ENCODE measurements at regions of chr5 and their contacts with region 1.

Region 1: DNA sequence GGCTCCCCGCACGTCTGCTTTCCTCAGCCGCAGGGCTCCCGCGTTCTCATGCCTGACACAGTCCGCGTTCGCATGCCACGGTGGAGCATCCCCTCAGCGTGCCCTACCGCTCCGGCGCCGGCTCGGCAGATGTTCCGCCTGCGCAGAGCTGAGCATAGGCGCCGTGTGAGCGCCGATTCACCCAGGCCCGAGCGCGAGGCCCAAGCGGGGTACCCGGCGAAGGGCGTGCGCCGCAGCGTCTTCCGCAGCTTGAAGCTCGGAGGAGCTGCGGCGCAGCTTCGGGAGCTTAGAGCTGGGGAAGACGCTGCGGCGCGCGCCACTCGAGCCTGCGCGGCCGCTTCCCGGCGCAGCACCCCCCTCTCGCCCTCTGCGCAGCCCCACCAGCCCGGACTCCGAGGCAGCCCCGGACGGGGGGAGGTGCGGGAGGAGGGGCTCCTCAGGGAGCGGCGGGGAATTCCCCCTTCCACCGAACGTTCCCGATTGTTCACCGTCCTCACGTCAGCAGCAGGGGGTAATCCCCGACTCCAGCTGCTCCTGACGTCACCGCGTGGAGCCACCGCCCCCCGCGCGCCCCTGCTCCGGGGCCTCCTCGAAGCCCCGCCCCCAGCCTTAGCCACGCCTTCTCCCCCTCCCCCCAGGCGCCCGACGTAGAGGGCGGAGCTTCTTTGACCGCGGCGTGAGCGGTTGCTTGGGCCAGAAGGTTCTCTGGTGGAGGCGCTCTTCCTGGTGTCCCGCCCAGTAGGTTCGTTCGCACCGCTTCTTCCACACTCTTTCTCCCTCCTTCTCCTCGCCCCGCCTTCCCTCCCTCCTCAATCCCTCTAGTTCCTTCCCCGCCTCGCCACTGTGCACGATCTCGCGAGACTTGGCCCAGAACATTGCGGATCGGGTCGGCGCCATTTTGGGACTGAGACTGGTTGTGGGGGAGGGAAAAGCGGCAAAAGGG is at the start of gene GPBP1:
- DNase-seq: peak; percentile 99
- H3K4me3 Mint-ChIP-seq: peak within 1 kb of the TSS; percentile 94
- H3K27ac Mint-ChIP-seq: peak within 1 kb of the TSS; percentile 97
- H3K4me1 Mint-ChIP-seq: peaks cover 19% of the 10 kb centered on the region
- H3K27me3 Mint-ChIP-seq: no peaks in the 10 kb centered on the region
- total RNA-seq, gene GPBP1: 91.5 to 91.9 TPM

Region 2: GRCh38 chr5:55994574-55995333 is 1178.7 kb before region 1 on chr5 and contains the start of gene IL6ST:
- CTCF ChIA-PET with region 1: no interaction called
- intact Hi-C with region 1: loop called (anchors 1 kb)
- DNase-seq: peak; percentile 97
- H3K4me3 Mint-ChIP-seq: peak within 1 kb of the TSS; percentile 100
- H3K27ac Mint-ChIP-seq: peak within 1 kb of the TSS; percentile 100
- H3K4me1 Mint-ChIP-seq: peaks cover 53% of the 10 kb centered on the region
- H3K27me3 Mint-ChIP-seq: no peaks in the 10 kb centered on the region
- total RNA-seq, gene IL6ST: 93.4 to 103 TPM

Region 3: DNA sequence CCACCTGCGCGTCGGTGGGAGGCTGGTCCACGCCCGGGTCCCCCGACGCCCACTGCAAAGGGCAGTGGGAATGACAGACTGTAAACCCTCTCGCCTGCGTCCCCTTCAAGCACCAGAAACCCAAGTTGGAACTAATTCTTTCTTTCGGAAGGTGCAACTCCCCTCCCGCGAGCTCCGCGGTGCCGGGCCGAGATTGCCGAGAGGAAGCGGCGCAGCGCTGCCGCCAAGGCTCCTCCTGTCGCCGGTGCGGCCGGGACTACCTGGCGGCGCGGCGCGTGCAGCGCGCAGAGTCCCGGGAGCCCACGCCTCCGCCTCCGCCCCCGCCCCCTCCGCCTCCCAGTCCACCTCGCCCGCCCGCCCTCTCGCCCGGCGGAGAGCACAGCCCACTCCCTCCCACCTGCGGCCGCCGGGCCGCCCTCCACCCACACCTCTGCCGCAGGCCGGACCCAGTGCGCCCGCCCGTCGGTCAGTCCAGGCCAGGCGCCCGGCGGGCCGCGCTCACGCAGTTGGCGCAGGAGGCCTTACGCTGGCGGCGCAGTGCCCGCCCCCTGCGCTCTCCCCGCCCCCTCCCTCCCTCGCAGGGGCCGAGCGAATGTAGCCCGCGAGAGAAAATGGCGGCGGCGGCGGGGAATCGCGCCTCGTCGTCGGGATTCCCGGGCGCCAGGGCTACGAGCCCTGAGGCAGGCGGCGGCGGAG is 358.3 kb before region 1 on chr5 and contains the start of gene MAP3K1:
- CTCF ChIA-PET with region 1: no interaction called
- intact Hi-C with region 1: loop called (anchors 1 kb)
- DNase-seq: peak; percentile 74
- H3K4me3 Mint-ChIP-seq: peak within 1 kb of the TSS; percentile 88
- H3K27ac Mint-ChIP-seq: peak within 1 kb of the TSS; percentile 87
- H3K4me1 Mint-ChIP-seq: peaks cover 34% of the 10 kb centered on the region
- H3K27me3 Mint-ChIP-seq: no peaks in the 10 kb centered on the region
- total RNA-seq, gene MAP3K1: 18.2 to 19.2 TPM

Region 4: DNA sequence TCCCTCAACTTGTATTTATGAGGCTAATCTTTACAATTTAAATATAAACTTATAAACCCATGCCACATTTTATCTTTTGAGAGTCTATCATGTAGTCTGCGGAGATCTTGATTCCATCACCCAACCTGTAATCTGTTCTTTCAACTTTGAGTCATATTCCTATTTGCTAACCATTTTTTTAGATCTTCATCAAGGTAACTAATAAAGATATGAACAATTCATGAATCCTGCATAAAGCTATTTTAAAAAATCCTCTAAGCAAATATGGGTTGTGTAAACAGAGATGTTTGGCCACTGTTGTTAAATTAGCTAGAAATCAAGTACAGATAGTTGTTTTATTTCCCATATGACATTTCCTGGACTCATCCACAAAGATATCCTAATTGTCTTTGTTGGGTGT is 123.5 kb before region 1 on chr5:
- CTCF ChIA-PET with region 1: no interaction called
- intact Hi-C with region 1: no loop called
- DNase-seq: no peak
- H3K4me3 Mint-ChIP-seq: no peak overlapping the region
- H3K27ac Mint-ChIP-seq: no peak overlapping the region
- H3K4me1 Mint-ChIP-seq: no peaks in the 10 kb centered on the region
- H3K27me3 Mint-ChIP-seq: no peaks in the 10 kb centered on the region

Region 5: GRCh38 chr5:57085306-57086081 is 88.0 kb before region 1 on chr5:
- CTCF ChIA-PET with region 1: no interaction called
- intact Hi-C with region 1: no loop called
- DNase-seq: no peak
- H3K4me3 Mint-ChIP-seq: no peak overlapping the region
- H3K27ac Mint-ChIP-seq: no peak overlapping the region
- H3K4me1 Mint-ChIP-seq: no peaks in the 10 kb centered on the region
- H3K27me3 Mint-ChIP-seq: no peaks in the 10 kb centered on the region

Region 6: DNA sequence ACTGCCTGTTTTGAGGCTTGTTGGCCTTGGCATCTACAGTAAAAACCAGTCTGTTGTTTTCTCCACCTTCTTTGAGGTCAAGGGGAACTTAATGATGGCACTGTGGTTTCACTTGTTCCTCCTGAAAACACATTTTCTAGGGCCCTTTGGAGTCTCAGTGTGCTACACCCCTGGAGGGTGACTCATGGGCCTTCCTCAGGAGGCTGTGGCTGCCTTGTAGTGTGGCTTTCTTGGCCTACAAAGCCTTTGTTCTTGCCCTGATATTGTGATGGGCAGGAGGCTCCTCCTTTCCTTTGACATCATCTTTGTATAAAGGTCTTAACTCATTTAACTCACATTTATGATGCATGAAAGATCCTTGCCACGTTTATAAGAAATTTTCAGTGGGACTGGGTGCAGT is 55.9 kb before region 1 on chr5:
- CTCF ChIA-PET with region 1: no interaction called
- intact Hi-C with region 1: no loop called
- DNase-seq: peak; percentile 67
- H3K4me3 Mint-ChIP-seq: no peak overlapping the region
- H3K27ac Mint-ChIP-seq: peak overlapping the region; percentile 10
- H3K4me1 Mint-ChIP-seq: peaks cover 9% of the 10 kb centered on the region
- H3K27me3 Mint-ChIP-seq: no peaks in the 10 kb centered on the region

Region 7: GRCh38 chr5:57193757-57194413 is 20.4 kb after region 1 on chr5:
- CTCF ChIA-PET with region 1: interaction called, 9 read pairs
- intact Hi-C with region 1: loop called (anchors 1 kb)
- DNase-seq: no peak
- H3K4me3 Mint-ChIP-seq: no peak overlapping the region
- H3K27ac Mint-ChIP-seq: peak overlapping the region; percentile 68
- H3K4me1 Mint-ChIP-seq: peaks cover 80% of the 10 kb centered on the region
- H3K27me3 Mint-ChIP-seq: no peaks in the 10 kb centered on the region

Region 8: GRCh38 chr5:57804007-57804444 is 630.6 kb after region 1 on chr5:
- CTCF ChIA-PET with region 1: no interaction called
- intact Hi-C with region 1: no loop called
- DNase-seq: no peak
- H3K4me3 Mint-ChIP-seq: no peak overlapping the region
- H3K27ac Mint-ChIP-seq: no peak overlapping the region
- H3K4me1 Mint-ChIP-seq: no peaks in the 10 kb centered on the region
- H3K27me3 Mint-ChIP-seq: peaks cover 7% of the 10 kb centered on the region

Region 9: GRCh38 chr5:59039296-59040023 is 1866.0 kb after region 1 on chr5:
- CTCF ChIA-PET with region 1: no interaction called
- intact Hi-C with region 1: loop called (anchors 5 kb)
- DNase-seq: peak; percentile 90
- H3K4me3 Mint-ChIP-seq: peak overlapping the region; percentile 94
- H3K27ac Mint-ChIP-seq: peak overlapping the region; percentile 96
- H3K4me1 Mint-ChIP-seq: peaks cover 44% of the 10 kb centered on the region
- H3K27me3 Mint-ChIP-seq: no peaks in the 10 kb centered on the region